Activated CD4-positive, alpha-beta T cell treated with anti-CD3 and anti-CD28 coated beads for 36 hours (primary cell): ENCODE measurements at regions of chr1 and their contacts with region 1.

Region 1: GRCh38 chr1:22704440-22705067 is 6.1 kb upstream of the EPHB2 start:
- DNase-seq: peak; percentile 91
- ATAC-seq: peak; percentile 100
- H3K4me3 Mint-ChIP-seq: no peak overlapping the region
- H3K27ac Mint-ChIP-seq: no peak overlapping the region
- H3K4me1 Mint-ChIP-seq: no peaks in the 10 kb centered on the region
- H3K27me3 Mint-ChIP-seq: peaks cover 26% of the 10 kb centered on the region

Region 2: GRCh38 chr1:21552715-21553114 is 1151.8 kb before region 1 on chr1:
- CTCF ChIA-PET with region 1: no interaction called
- POLR2A ChIA-PET with region 1: no interaction called
- intact Hi-C with region 1: no loop called
- DNase-seq: no peak
- ATAC-seq: no peak
- H3K4me3 Mint-ChIP-seq: no peak overlapping the region
- H3K27ac Mint-ChIP-seq: no peak overlapping the region
- H3K4me1 Mint-ChIP-seq: no peaks in the 10 kb centered on the region
- H3K27me3 Mint-ChIP-seq: peaks cover 28% of the 10 kb centered on the region

Region 3: GRCh38 chr1:22721122-22721873 is 16.7 kb after region 1 on chr1:
- CTCF ChIA-PET with region 1: interaction called, 24 read pairs
- POLR2A ChIA-PET with region 1: no interaction called
- intact Hi-C with region 1: no loop called
- DNase-seq: no peak
- ATAC-seq: no peak
- H3K4me3 Mint-ChIP-seq: no peak overlapping the region
- H3K27ac Mint-ChIP-seq: no peak overlapping the region
- H3K4me1 Mint-ChIP-seq: no peaks in the 10 kb centered on the region
- H3K27me3 Mint-ChIP-seq: peaks cover 17% of the 10 kb centered on the region

Region 4: DNA sequence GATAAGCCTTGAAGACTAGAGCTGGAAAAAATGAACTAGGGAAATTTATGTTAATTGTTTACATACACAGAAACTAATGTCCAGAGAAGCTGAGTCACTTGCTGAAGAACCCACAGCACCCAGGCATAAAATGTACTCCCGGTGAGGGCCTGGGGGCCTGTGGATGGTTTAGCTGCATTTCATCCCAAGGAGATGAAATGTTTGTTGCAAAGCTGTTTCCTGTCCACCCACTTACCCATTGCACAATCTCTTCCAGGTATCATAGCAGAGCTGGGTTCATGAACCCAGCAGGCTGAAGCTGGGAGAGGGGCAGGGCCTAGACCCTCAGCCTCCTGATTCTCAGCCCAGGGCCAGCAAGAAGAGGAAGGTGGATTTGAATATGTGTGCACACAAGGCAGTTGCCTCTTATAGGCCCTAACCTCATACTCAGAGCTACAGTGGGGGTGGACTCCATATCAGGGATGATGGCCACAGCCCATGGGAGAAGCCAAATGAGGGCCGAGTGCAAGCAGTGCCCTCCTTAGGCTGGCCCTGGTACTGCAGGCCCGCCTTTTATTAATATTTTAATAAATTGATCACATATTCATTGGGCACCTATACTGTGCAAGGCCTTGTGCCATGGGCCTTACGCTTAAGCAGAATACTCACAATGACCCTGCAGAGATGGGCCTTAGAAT is 157.3 kb after region 1 on chr1:
- CTCF ChIA-PET with region 1: interaction called, 6 read pairs
- POLR2A ChIA-PET with region 1: no interaction called
- intact Hi-C with region 1: loop called in 1 of 2 experiments (anchors 1 kb)
- DNase-seq: peak; percentile 35
- ATAC-seq: no peak
- H3K4me3 Mint-ChIP-seq: no peak overlapping the region
- H3K27ac Mint-ChIP-seq: no peak overlapping the region
- H3K4me1 Mint-ChIP-seq: no peaks in the 10 kb centered on the region
- H3K27me3 Mint-ChIP-seq: peaks cover 7% of the 10 kb centered on the region

Region 5: DNA sequence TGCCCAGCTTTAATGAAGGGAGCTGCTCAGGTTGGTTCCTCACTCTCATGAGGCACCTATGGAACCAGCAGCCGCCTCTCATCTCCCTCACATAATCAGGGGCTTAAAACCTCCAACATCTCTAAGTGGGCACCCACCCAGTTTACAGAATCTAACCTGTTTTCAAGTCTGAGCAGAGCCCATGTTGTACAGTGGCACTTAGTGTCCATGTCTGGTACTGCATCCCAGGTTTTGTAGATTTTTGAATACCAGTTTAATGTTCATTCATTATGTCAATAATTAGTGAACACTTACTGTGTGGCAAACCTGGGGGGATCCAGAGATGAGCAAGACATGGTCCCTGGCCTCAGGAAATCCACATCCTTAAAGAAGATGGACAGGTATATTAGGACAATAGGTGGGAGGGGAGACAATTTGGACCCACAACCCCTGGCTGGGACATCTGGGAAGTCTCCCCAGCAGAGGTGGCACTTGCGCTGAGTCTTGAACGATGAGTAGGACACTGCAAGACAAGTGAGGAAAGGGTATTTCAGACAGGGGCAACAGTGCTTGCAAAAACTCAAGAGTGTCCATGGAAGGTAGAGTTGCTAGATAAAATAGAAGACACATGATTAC is 184.8 kb after region 1 on chr1:
- CTCF ChIA-PET with region 1: interaction called, 16 read pairs
- POLR2A ChIA-PET with region 1: no interaction called
- intact Hi-C with region 1: loop called (anchors 1 kb)
- DNase-seq: peak; percentile 26
- ATAC-seq: no peak
- H3K4me3 Mint-ChIP-seq: no peak overlapping the region
- H3K27ac Mint-ChIP-seq: no peak overlapping the region
- H3K4me1 Mint-ChIP-seq: peaks cover 9% of the 10 kb centered on the region
- H3K27me3 Mint-ChIP-seq: peaks cover 2% of the 10 kb centered on the region

Region 6: DNA sequence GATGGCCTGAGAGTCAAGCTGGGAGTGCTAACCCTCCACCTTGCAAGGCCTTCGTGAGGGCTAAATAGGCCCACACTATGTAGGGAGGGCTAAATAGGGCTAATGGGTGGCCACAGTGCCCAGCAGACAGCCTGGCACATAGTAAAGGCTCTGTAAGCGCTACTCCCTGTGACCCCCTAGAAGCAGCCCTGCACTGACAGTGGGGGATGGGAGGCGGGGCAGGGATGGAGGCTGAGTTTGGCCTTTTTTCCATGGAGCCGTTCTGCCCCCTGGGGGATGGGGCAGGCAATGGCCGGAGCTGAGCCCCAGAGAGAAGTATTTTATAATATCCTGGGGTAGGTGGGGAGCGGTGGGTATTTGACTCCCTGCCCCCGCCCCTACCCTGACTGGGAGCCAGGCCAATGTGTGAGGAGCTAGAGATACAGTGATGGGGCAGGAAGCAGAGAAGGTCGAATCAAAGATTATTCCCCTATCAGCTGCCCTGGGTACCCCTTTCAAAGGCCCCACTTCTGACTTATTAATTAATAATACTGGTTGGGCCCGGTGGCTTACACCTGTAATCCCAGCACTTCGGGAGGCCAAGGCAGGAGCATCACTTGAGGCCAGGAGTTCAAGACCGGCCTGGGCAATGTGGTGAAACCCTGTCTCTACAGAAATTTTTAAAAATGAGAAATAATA is 225.8 kb after region 1 on chr1:
- CTCF ChIA-PET with region 1: interaction called, 10 read pairs
- POLR2A ChIA-PET with region 1: no interaction called
- intact Hi-C with region 1: loop called in 1 of 2 experiments (anchors 1 kb)
- DNase-seq: peak; percentile 57
- ATAC-seq: peak; percentile 58
- H3K4me3 Mint-ChIP-seq: no peak overlapping the region
- H3K27ac Mint-ChIP-seq: no peak overlapping the region
- H3K4me1 Mint-ChIP-seq: no peaks in the 10 kb centered on the region
- H3K27me3 Mint-ChIP-seq: peaks cover 18% of the 10 kb centered on the region

Region 7: DNA sequence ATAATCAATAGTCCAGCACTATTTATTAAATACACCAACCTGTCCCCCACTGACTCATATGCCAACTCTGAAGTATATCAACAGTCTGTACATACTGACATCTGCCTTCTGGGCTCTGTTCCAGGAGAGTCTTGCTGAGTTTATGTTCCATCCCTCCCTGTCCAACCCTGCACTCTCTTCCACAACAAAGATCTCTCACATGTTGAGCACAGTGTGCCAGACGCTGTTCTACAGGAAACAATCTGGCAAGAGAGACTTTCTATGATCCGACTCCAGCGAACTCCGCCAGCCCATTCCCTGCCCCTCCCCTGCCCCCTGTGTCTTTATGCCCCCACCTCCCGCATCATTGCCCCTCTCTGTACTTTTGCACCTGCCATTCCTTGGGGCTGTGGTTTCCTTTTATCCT is 264.8 kb after region 1 on chr1:
- CTCF ChIA-PET with region 1: interaction called, 8 read pairs
- POLR2A ChIA-PET with region 1: no interaction called
- intact Hi-C with region 1: loop called (anchors 1 kb)
- DNase-seq: no peak
- ATAC-seq: no peak
- H3K4me3 Mint-ChIP-seq: no peak overlapping the region
- H3K27ac Mint-ChIP-seq: no peak overlapping the region
- H3K4me1 Mint-ChIP-seq: no peaks in the 10 kb centered on the region
- H3K27me3 Mint-ChIP-seq: peaks cover 34% of the 10 kb centered on the region

Region 8: GRCh38 chr1:22995774-22996173 is 291.2 kb after region 1 on chr1:
- CTCF ChIA-PET with region 1: no interaction called
- POLR2A ChIA-PET with region 1: no interaction called
- intact Hi-C with region 1: no loop called
- DNase-seq: no peak
- ATAC-seq: no peak
- H3K4me3 Mint-ChIP-seq: no peak overlapping the region
- H3K27ac Mint-ChIP-seq: no peak overlapping the region
- H3K4me1 Mint-ChIP-seq: no peaks in the 10 kb centered on the region
- H3K27me3 Mint-ChIP-seq: no peaks in the 10 kb centered on the region